ENCODE measurements at regions of chr3 and their contacts with region 1.

Region 1: DNA sequence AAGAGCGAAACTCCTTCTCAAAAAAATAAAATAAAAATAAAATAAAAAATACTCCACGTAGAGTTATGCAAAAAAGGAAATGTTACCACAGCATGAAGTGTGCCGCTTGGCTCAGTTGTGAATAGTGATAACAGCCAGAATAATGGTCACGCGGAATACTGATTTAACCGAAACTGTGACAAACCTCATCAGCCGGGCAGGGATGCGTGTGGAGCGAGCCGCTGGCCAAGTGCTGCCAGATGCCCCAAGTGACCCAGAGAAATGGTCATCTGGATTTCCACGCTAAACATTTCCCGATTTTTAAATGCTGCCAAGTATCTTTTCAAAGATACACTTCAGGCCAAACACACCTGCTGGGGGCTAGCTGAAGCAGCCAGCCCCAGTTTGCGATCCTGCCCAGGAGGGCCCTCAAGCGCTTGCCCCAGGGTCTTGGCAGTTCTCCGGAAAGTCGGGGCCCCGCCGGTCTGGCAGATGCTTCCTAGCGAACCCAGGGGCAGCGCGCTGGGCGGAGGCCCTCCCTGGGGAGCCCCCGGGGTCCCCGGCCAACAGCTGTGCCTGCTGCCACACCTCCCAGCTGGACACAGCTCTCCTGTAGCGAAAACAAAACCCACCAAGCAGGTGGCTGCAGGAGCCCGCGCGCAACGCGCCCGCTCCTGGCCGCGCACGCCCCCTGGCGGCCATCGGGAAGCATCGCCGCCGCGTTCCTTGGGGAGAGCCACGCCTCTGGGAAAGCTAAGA is 35.1 kb downstream of the CMTM6 start:
- DNase-seq: peak; percentile 79
- H3K4me3 Mint-ChIP-seq: no peak overlapping the region
- H3K27ac Mint-ChIP-seq: no peak overlapping the region
- H3K4me1 Mint-ChIP-seq: peaks cover 25% of the 10 kb centered on the region
- H3K27me3 Mint-ChIP-seq: no peaks in the 10 kb centered on the region
- CTCF ChIP-seq: peak; percentile 96

Region 2: DNA sequence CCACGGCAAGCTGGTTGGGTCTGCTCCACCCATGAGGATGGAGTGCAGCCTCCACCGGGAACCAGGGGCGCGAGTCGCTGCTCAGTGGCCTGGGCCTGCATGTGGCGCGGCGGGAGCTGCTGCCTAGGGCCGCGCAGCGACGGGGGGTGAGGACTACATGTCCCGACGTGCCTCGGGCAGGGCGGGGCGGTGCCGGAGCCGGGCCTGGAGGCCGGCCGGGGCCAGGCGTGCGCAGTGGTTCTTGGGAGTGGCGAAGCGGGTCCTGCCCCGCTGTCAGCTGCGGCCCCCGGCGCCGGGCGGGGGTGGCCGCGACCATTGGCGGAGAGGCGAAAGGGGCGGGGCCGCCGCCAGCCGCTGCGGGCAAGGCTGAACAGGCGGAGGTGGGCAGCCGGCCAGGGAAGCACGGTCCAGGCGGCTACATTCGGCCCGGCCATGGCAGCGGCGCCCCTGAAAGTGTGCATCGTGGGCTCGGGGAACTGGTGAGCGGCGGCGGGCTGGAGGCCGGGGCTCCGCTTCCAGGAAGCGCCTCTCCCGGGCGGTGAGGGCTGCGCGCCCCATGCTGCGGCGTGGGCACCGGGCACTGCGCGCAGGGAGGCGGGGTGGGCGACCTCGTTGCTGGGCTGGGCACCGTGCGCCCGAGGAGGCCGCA is 361.1 kb before region 1 on chr3 and contains the start of gene GPD1L:
- CTCF ChIA-PET with region 1: no interaction called
- POLR2A ChIA-PET with region 1: no interaction called
- intact Hi-C with region 1: no loop called
- DNase-seq: peak; percentile 95
- H3K4me3 Mint-ChIP-seq: peak within 1 kb of the TSS; percentile 77
- H3K27ac Mint-ChIP-seq: peak within 1 kb of the TSS; percentile 16
- H3K4me1 Mint-ChIP-seq: peaks cover 14% of the 10 kb centered on the region
- H3K27me3 Mint-ChIP-seq: no peaks in the 10 kb centered on the region
- CTCF ChIP-seq: no peak
- total RNA-seq, gene GPD1L: 8.5 and 9.7 TPM in 2 replicates

Region 3: GRCh38 chr3:32177702-32178198 is 289.8 kb before region 1 on chr3:
- CTCF ChIA-PET with region 1: interaction called, 15 read pairs
- POLR2A ChIA-PET with region 1: no interaction called
- intact Hi-C with region 1: no loop called
- DNase-seq: peak; percentile 89
- H3K4me3 Mint-ChIP-seq: no peak overlapping the region
- H3K27ac Mint-ChIP-seq: no peak overlapping the region
- H3K4me1 Mint-ChIP-seq: peaks cover 15% of the 10 kb centered on the region
- H3K27me3 Mint-ChIP-seq: no peaks in the 10 kb centered on the region
- CTCF ChIP-seq: peak; percentile 75

Region 4: GRCh38 chr3:32374788-32375595 is 92.5 kb before region 1 on chr3:
- CTCF ChIA-PET with region 1: interaction called, 108 read pairs
- POLR2A ChIA-PET with region 1: interaction called, 3 read pairs
- intact Hi-C with region 1: loop called (anchors 1 kb)
- DNase-seq: peak; percentile 79
- H3K4me3 Mint-ChIP-seq: no peak overlapping the region
- H3K27ac Mint-ChIP-seq: no peak overlapping the region
- H3K4me1 Mint-ChIP-seq: no peaks in the 10 kb centered on the region
- H3K27me3 Mint-ChIP-seq: no peaks in the 10 kb centered on the region
- CTCF ChIP-seq: peak; percentile 71

Region 5: DNA sequence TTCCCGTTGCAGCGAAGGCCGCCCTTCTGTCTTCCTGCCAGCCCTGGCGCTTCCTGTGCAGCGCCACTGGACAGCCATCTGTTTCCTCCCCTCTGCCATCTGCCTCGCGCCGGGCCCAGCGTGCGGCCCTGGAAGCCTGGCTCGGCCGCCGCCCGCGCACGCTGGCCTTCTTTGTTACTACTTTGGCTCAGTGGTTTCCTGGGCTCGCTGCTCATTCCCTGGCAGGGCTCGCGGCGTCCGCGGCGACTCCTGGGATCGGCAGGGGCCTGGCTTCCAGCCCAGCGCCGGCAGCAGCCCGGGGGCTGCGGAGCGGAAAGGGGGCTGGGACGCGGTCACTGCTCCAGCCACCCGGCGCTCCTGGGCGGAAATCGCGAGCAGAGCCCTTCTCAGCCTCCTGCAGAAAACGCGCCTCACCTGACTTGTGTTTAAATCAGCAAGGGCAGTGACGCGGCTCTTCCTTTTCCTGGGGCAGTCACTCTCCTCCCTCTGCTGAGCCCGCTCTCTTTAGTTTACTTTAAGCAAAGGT is 65.9 kb before region 1 on chr3:
- CTCF ChIA-PET with region 1: interaction called, 17 read pairs
- POLR2A ChIA-PET with region 1: interaction called, 6 read pairs
- intact Hi-C with region 1: loop called (anchors 2 kb)
- DNase-seq: peak; percentile 55
- H3K4me3 Mint-ChIP-seq: peak overlapping the region; percentile 62
- H3K27ac Mint-ChIP-seq: peak overlapping the region; percentile 73
- H3K4me1 Mint-ChIP-seq: peaks cover 13% of the 10 kb centered on the region
- H3K27me3 Mint-ChIP-seq: no peaks in the 10 kb centered on the region
- CTCF ChIP-seq: no peak

Region 6: GRCh38 chr3:32414520-32415202 is 52.8 kb before region 1 on chr3:
- CTCF ChIA-PET with region 1: interaction called, 10 read pairs
- POLR2A ChIA-PET with region 1: no interaction called
- intact Hi-C with region 1: no loop called
- DNase-seq: no peak
- H3K4me3 Mint-ChIP-seq: no peak overlapping the region
- H3K27ac Mint-ChIP-seq: no peak overlapping the region
- H3K4me1 Mint-ChIP-seq: peaks cover 10% of the 10 kb centered on the region
- H3K27me3 Mint-ChIP-seq: no peaks in the 10 kb centered on the region
- CTCF ChIP-seq: no peak

Region 7: DNA sequence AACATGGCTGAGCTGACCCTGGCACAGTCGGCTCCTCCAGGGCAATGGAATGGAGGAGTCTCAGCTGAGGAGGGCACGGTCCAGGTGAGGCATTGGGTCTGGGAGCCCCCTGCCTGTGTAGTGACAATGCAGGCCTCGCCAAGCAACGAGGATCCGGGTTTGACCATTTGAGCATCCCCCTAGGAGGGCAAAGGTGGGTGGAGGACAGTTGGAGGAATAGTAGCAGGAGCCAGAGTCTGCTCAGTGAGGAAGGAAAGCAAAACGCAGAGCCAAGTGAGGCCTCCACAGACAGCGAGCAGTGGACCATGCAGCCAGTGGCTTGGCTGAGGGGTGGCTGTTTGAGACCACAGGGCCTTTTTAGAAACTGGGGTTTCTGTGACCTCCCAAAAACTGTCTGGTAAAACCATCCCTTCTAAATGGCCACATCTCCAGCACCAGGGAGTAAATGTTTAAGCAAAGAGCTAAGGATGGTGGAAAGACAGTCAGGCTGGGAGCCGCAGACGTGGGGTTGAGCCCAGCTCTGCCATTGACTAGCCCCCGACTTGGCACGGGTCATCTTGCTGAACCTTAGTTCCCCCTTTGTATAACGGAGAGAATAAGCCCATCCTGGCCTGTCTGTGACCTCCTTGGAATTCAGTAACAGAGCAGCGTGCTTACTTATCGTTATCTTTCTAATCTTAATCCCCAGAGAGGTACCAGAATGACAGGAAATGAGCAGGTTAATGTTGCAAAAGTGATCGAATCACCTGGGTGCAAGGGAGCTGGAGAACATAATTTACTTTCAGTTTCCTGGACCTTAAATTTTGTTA is 11.7 kb before region 1 on chr3:
- CTCF ChIA-PET with region 1: interaction called, 11 read pairs
- POLR2A ChIA-PET with region 1: interaction called, 3 read pairs
- intact Hi-C with region 1: no loop called
- DNase-seq: no peak
- H3K4me3 Mint-ChIP-seq: no peak overlapping the region
- H3K27ac Mint-ChIP-seq: no peak overlapping the region
- H3K4me1 Mint-ChIP-seq: no peaks in the 10 kb centered on the region
- H3K27me3 Mint-ChIP-seq: no peaks in the 10 kb centered on the region
- CTCF ChIP-seq: no peak

Region 8: GRCh38 chr3:32502118-32502945 is 34.8 kb after region 1 on chr3 and contains the start of gene CMTM6:
- CTCF ChIA-PET with region 1: interaction called, 5 read pairs
- POLR2A ChIA-PET with region 1: interaction called, 17 read pairs
- intact Hi-C with region 1: no loop called
- DNase-seq: peak; percentile 82
- H3K4me3 Mint-ChIP-seq: peak within 1 kb of the TSS; percentile 95
- H3K27ac Mint-ChIP-seq: peak within 1 kb of the TSS; percentile 67
- H3K4me1 Mint-ChIP-seq: peaks cover 14% of the 10 kb centered on the region
- H3K27me3 Mint-ChIP-seq: no peaks in the 10 kb centered on the region
- CTCF ChIP-seq: no peak
- total RNA-seq, gene CMTM6: 27.2 and 32.2 TPM in 2 replicates

Region 9: GRCh38 chr3:33211444-33211843 is 743.9 kb after region 1 on chr3:
- CTCF ChIA-PET with region 1: no interaction called
- POLR2A ChIA-PET with region 1: no interaction called
- intact Hi-C with region 1: no loop called
- DNase-seq: peak; percentile 92
- H3K4me3 Mint-ChIP-seq: no peak overlapping the region
- H3K27ac Mint-ChIP-seq: no peak overlapping the region
- H3K4me1 Mint-ChIP-seq: peaks cover 7% of the 10 kb centered on the region
- H3K27me3 Mint-ChIP-seq: peaks cover 11% of the 10 kb centered on the region
- CTCF ChIP-seq: no peak